ENCODE measurements at regions of chr3 and their contacts with region 1.

Region 1: GRCh38 chr3:153043729-153044328 is 118.2 kb upstream of the RAP2B start:
- DNase-seq: no peak
- ATAC-seq: no peak
- H3K4me3 ChIP-seq: no peak overlapping the region
- H3K27ac ChIP-seq: peak overlapping the region; percentile 4; the same call in 1 of the 3 replicates
- H3K4me1 ChIP-seq: peaks cover 4 to 5% of the 10 kb centered on the region in 2 experiments; a peak in 3 of 5 replicates
- H3K27me3 ChIP-seq: no peaks in the 10 kb centered on the region
- CTCF ChIP-seq: no peak
- EP300 ChIP-seq: no peak
- POLR2A ChIP-seq: no peak
- RAD21 ChIP-seq: no peak

Region 2: GRCh38 chr3:153090973-153091372 is 47.1 kb after region 1 on chr3:
- CTCF ChIA-PET with region 1: no interaction called
- POLR2A ChIA-PET with region 1: no interaction called
- in situ Hi-C with region 1: no loop called
- intact Hi-C with region 1: loop called (anchors 5 kb)
- DNase-seq: no peak
- ATAC-seq: no peak
- H3K4me3 ChIP-seq: no peak overlapping the region
- H3K27ac ChIP-seq: no peak overlapping the region
- H3K4me1 ChIP-seq: 0 out of 5 replicates have a peak, but pooled peaks cover 0 to 5% of the 10 kb centered on the region in 2 experiments
- H3K27me3 ChIP-seq: no peaks in the 10 kb centered on the region
- CTCF ChIP-seq: no peak
- EP300 ChIP-seq: no peak
- POLR2A ChIP-seq: no peak
- RAD21 ChIP-seq: no peak

Region 3: GRCh38 chr3:153291056-153291685 is 247.3 kb after region 1 on chr3:
- CTCF ChIA-PET with region 1: no interaction called
- POLR2A ChIA-PET with region 1: no interaction called
- in situ Hi-C with region 1: loop called (anchors 25 kb)
- intact Hi-C with region 1: loop called (anchors 1 kb)
- DNase-seq: peak; percentile 17 to 67 (median 31)
- ATAC-seq: peak; percentile 84
- H3K4me3 ChIP-seq: no peak overlapping the region
- H3K27ac ChIP-seq: no peak overlapping the region
- H3K4me1 ChIP-seq: peaks cover 0 to 21% of the 10 kb centered on the region in 2 experiments; a peak in 2 of 5 replicates
- H3K27me3 ChIP-seq: no peaks in the 10 kb centered on the region
- CTCF ChIP-seq: peak; percentile 56 to 66 (median 56)
- EP300 ChIP-seq: no peak
- POLR2A ChIP-seq: no peak
- RAD21 ChIP-seq: peak; percentile 36 to 67; a peak in 3 of 4 replicates

Region 4: DNA sequence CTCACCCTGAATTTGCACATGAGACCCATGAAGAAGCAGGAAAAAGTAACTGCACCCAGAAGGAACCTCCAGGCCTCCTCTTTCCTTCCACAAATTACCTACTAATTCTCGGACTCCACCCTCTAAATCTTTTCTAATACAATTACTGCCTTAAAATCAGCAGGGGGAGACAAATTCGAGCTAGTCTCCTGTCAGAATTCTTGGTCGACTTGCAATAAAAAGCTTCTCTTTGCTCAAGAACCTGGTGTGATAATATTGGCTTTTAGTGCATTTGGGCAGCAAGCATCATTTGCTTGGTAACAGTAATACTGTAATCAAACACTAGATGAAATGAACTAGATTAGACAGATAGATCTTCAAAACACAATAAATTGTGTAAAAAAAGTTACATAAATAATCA is 400.1 kb after region 1 on chr3:
- CTCF ChIA-PET with region 1: no interaction called
- POLR2A ChIA-PET with region 1: no interaction called
- in situ Hi-C with region 1: no loop called
- intact Hi-C with region 1: loop called (anchors 5 kb)
- DNase-seq: peak in 1 of 4 experiments; percentile 21
- ATAC-seq: no peak
- H3K4me3 ChIP-seq: no peak overlapping the region
- H3K27ac ChIP-seq: no peak overlapping the region
- H3K4me1 ChIP-seq: no peaks in the 10 kb centered on the region; a peak in 1 of 5 replicates
- H3K27me3 ChIP-seq: no peaks in the 10 kb centered on the region
- CTCF ChIP-seq: peak in 2 of 3 experiments; percentile 20 to 46; a peak in 3 of 6 replicates
- EP300 ChIP-seq: no peak
- POLR2A ChIP-seq: no peak
- RAD21 ChIP-seq: peak in 1 of 2 experiments; percentile 57; a peak in 2 of 4 replicates

Region 5: DNA sequence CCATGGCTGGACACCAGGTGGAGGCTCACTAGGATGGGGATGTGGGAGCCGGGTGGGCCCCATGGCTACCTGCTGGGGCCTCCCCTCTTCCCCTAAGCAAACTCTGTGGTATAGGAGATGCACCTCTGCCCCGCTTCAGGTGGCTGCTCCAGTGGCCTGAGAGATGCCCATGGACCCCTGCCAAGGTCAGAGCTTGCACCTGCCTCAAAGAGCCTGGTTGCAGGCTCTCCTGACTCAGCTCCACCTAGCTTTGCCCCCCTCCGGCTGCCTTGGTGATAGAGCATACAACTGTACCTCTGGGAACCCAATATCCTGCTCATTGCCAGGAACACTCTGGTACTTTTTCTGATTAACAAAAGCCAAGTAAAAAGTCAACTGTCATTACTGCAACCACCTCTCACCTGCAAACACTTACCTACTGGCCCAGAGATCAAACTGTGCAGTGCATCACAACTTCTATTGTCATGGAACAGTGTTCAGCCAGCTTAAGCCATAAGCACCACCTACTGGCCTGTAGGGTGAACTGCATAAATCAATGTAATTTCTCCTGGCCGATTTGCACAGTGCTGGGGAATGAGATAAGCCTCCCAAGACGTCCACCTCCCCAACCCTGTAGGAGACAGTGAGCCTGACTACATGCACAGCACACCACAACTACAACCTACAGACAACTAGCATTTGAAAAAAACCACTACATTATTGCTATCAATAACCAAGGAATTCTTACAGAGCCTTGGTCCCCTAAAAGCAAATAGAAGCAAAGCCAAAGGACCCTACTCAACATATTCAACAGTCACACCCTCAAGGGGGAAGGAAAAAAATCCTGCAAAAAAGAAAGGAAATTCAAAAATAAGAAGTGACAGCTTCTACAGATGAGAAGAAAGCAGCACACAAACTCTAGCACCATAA is 725.0 kb after region 1 on chr3:
- CTCF ChIA-PET with region 1: no interaction called
- POLR2A ChIA-PET with region 1: no interaction called
- in situ Hi-C with region 1: no loop called
- intact Hi-C with region 1: loop called (anchors 2 kb)
- DNase-seq: peak; percentile 21 to 55 (median 34)
- ATAC-seq: peak; percentile 92
- H3K4me3 ChIP-seq: no peak overlapping the region
- H3K27ac ChIP-seq: no peak overlapping the region
- H3K4me1 ChIP-seq: no peaks in the 10 kb centered on the region
- H3K27me3 ChIP-seq: no peaks in the 10 kb centered on the region
- CTCF ChIP-seq: peak; percentile 51 to 65 (median 62)
- EP300 ChIP-seq: no peak
- POLR2A ChIP-seq: no peak
- RAD21 ChIP-seq: peak; percentile 57 to 72

Measured in K562 (cell line).